ENCODE measurements at regions of chr1 and their contacts with region 1.

Region 1: DNA sequence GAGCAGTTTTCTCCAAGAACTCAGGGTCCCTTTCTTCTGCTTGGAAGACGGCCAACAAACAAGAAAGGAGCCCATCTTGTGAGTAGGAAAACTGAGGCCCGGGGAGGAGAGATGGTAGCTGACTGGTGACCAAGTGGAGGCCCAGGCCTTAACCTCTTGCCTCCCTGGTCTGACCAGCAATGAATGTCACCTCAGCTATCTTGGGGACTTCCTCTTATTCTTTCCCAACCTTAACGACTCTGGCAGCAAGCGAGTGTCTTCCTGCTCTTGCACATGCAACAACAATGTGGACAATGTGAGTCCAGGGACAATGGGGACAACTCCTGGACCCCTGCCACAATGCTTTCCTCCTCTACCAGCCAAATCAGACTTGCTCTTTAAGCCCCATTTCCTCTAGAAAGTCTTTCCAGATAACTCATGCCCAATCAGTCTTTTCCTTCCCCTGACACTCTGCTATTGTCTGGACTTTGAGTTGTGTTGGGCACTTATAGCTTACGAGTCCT is 12.6 kb downstream of the HSPG2 start:
- DNase-seq: no peak
- H3K4me3 ChIP-seq: no peak overlapping the region
- H3K4me3 Mint-ChIP-seq: no peak overlapping the region
- H3K27ac Mint-ChIP-seq: peak overlapping the region; percentile 95
- H3K4me1 ChIP-seq: peaks cover 95% of the 10 kb centered on the region
- H3K4me1 Mint-ChIP-seq: peaks cover 49% of the 10 kb centered on the region
- H3K27me3 ChIP-seq: no peaks in the 10 kb centered on the region
- H3K27me3 Mint-ChIP-seq: no peaks in the 10 kb centered on the region
- CTCF ChIP-seq: no peak

Region 2: DNA sequence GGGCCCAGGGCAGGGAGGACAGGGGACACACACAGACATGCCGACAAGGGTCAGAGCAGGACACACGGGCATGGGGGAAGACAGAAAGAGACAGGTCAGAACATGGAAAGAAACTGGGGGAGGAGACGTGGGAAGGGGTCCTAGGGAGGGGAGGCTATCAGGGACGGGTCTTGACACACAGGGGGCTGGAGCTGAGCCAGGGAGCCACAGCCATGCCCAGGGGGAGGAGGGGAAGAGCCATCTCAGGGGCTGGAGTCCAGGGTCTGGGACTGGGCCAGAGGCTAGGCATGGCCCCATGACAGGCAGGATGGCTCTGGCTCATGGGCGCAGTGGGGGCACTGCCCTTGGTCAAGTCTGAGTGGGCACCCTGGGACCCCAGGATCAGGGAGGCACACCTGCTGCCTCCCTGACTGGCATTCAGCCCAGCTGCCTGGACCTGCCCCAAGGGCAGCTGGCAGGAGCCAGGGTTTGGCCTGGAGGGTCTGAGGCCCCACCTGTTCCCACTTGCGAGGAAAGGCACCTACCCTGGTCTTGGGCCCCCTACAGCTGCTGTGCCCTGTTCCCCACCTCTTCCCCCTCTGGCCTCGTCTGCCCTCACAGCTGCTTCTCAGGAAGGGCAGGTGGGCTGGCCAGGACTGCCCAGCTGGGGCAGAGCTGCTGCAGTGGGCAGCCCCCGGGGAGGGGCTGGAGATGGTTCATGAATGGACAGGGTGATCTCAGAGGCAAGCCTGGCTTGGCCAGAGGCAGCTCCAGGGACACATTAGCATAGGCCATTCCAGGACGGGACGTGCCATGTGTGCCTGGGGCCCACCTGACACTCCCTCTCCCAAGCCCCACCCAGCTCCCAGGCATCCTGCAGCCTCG is 30.3 kb before region 1 on chr1:
- CTCF ChIA-PET with region 1: no interaction called
- POLR2A ChIA-PET with region 1: no interaction called
- intact Hi-C with region 1: no loop called
- DNase-seq: no peak
- H3K4me3 ChIP-seq: no peak overlapping the region
- H3K4me3 Mint-ChIP-seq: no peak overlapping the region
- H3K27ac Mint-ChIP-seq: peak overlapping the region; percentile 42
- H3K4me1 ChIP-seq: peaks cover 12% of the 10 kb centered on the region
- H3K4me1 Mint-ChIP-seq: peaks cover 16% of the 10 kb centered on the region
- H3K27me3 ChIP-seq: no peaks in the 10 kb centered on the region
- H3K27me3 Mint-ChIP-seq: no peaks in the 10 kb centered on the region
- CTCF ChIP-seq: no peak

Region 3: DNA sequence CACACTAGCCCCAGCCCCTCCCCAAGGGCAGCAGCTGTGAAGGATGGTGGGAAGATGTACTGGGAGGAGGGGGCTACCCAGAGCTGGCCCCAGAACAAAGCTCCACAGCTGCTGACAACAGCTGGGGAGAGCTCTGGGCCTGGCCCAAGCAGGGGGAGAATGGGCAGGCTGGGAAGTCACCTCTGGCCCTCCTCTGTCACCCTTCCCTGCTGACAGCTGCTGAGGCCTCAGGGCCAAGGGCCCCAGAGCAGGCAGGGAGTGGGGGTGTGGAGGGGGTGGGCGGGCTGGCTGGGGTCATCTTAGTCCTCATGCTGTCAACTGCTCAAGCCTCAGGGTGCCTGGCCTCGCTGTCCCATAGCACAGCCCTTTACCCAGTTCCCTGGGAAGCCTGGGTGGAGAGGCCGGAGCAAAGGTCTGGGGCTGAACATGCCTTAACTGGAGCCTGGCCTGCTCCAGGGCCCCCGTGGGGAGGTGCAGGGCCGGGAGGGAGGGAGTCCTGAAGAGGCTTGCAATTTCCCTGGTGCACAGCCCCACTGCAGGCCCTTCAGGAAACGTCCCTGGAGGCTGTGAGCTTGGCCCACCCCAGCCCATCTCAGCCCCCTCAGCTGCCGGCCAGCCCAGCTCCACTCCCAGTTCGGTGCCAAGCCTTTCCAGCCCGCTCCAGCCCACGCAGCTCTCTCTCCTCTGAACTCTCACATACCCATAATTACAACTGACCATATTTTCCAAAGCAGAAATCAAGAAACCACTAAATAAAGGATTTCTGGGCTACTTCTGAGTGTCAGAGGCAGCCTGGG is 13.2 kb before region 1 on chr1:
- CTCF ChIA-PET with region 1: interaction called, 4 read pairs
- POLR2A ChIA-PET with region 1: interaction called, 13 read pairs
- intact Hi-C with region 1: no loop called
- DNase-seq: peak; percentile 66 to 88
- H3K4me3 ChIP-seq: no peak overlapping the region
- H3K4me3 Mint-ChIP-seq: no peak overlapping the region
- H3K27ac Mint-ChIP-seq: peak overlapping the region; percentile 83
- H3K4me1 ChIP-seq: peaks cover 64% of the 10 kb centered on the region
- H3K4me1 Mint-ChIP-seq: peaks cover 49% of the 10 kb centered on the region
- H3K27me3 ChIP-seq: no peaks in the 10 kb centered on the region
- H3K27me3 Mint-ChIP-seq: no peaks in the 10 kb centered on the region
- CTCF ChIP-seq: no peak

Region 4: DNA sequence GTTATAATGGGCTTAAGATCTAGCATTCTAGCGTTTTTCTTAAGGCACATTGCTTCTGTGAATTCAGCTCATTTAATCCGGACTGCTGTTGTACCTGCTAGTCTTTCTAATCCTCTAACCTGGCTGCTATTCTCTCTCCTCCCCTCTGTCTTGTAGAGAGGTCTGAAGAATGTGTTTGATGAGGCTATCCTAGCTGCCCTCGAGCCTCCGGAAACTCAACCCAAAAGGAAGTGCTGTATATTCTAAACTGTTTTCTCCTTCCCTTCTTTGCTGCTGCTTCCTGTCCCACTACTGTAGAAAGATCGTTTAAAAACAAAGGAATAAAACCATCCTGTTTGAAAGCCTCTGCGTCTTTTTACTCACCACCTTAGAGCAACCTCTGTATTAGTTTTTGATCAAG is 165.2 kb after region 1 on chr1:
- CTCF ChIA-PET with region 1: no interaction called
- POLR2A ChIA-PET with region 1: no interaction called
- intact Hi-C with region 1: no loop called
- DNase-seq: no peak
- H3K4me3 ChIP-seq: no peak overlapping the region
- H3K4me3 Mint-ChIP-seq: no peak overlapping the region
- H3K27ac Mint-ChIP-seq: peak overlapping the region; percentile 0
- H3K4me1 ChIP-seq: no peaks in the 10 kb centered on the region
- H3K4me1 Mint-ChIP-seq: peaks cover 5% of the 10 kb centered on the region
- H3K27me3 ChIP-seq: no peaks in the 10 kb centered on the region
- H3K27me3 Mint-ChIP-seq: no peaks in the 10 kb centered on the region
- CTCF ChIP-seq: no peak

Measured in Caco-2 (cell line).